WTC11 (cell line): ENCODE measurements at regions of chr17 and their contacts with region 1.

Region 1: GRCh38 chr17:46035112-46035818 is 36.2 kb downstream of the STH start:
- DNase-seq: no peak
- ATAC-seq: no peak
- H3K4me3 Mint-ChIP-seq: no peak overlapping the region
- H3K27ac Mint-ChIP-seq: no peak overlapping the region
- H3K4me1 Mint-ChIP-seq: no peaks in the 10 kb centered on the region
- H3K27me3 Mint-ChIP-seq: no peaks in the 10 kb centered on the region
- CTCF ChIP-seq: no peak

Region 2: GRCh38 chr17:45873728-45874127 is 161.5 kb before region 1 on chr17:
- CTCF ChIA-PET with region 1: no interaction called
- POLR2A ChIA-PET with region 1: no interaction called
- DNase-seq: no peak
- ATAC-seq: no peak
- H3K4me3 Mint-ChIP-seq: no peak overlapping the region
- H3K27ac Mint-ChIP-seq: no peak overlapping the region
- H3K4me1 Mint-ChIP-seq: peaks cover 8% of the 10 kb centered on the region
- H3K27me3 Mint-ChIP-seq: peaks cover 10% of the 10 kb centered on the region; the same call in 1 of the 2 replicates
- CTCF ChIP-seq: no peak

Region 3: DNA sequence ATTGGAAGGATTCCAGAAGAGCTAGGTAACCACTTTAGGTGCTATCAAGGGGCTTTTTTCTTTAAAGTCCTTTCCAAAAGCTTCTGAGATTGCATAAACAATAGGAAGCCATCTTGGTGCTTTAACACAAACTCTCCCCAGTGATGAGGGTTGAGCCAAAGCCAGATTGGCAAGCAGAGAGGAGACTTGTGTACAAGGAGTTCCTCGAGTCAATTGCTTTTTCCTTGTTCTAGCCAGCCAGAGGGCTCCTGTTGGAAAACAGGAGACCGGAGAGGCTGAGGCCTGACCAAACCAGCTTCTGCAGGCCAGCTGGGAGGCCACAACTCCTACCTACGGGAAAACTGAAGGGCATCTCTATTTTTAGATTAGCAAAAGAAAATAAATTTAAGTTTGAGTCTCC is 94.4 kb before region 1 on chr17:
- CTCF ChIA-PET with region 1: no interaction called
- POLR2A ChIA-PET with region 1: no interaction called
- DNase-seq: no peak
- ATAC-seq: no peak
- H3K4me3 Mint-ChIP-seq: no peak overlapping the region
- H3K27ac Mint-ChIP-seq: no peak overlapping the region
- H3K4me1 Mint-ChIP-seq: peaks cover 42% of the 10 kb centered on the region
- H3K27me3 Mint-ChIP-seq: peaks cover 5% of the 10 kb centered on the region
- CTCF ChIP-seq: no peak

Region 4: DNA sequence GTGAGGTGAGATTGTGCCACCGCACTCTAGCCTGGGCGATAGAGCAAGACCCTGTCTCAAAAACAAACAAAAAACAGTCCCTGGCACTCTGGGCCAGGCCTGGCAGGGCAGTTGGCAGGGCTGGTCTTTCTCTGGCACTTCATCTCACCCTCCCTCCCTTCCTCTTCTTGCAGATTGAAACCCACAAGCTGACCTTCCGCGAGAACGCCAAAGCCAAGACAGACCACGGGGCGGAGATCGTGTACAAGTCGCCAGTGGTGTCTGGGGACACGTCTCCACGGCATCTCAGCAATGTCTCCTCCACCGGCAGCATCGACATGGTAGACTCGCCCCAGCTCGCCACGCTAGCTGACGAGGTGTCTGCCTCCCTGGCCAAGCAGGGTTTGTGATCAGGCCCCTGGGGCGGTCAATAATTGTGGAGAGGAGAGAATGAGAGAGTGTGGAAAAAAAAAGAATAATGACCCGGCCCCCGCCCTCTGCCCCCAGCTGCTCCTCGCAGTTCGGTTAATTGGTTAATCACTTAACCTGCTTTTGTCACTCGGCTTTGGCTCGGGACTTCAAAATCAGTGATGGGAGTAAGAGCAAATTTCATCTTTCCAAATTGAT is 11.4 kb before region 1 on chr17:
- CTCF ChIA-PET with region 1: no interaction called
- POLR2A ChIA-PET with region 1: no interaction called
- DNase-seq: no peak
- ATAC-seq: no peak
- H3K4me3 Mint-ChIP-seq: no peak overlapping the region
- H3K27ac Mint-ChIP-seq: no peak overlapping the region
- H3K4me1 Mint-ChIP-seq: peaks cover 21% of the 10 kb centered on the region
- H3K27me3 Mint-ChIP-seq: no peaks in the 10 kb centered on the region
- CTCF ChIP-seq: no peak

Region 5: GRCh38 chr17:46061435-46061834 is 26.2 kb after region 1 on chr17:
- CTCF ChIA-PET with region 1: no interaction called
- POLR2A ChIA-PET with region 1: no interaction called
- DNase-seq: no peak
- ATAC-seq: peak; percentile 64
- H3K4me3 Mint-ChIP-seq: no peak overlapping the region
- H3K27ac Mint-ChIP-seq: no peak overlapping the region
- H3K4me1 Mint-ChIP-seq: peaks cover 37% of the 10 kb centered on the region
- H3K27me3 Mint-ChIP-seq: no peaks in the 10 kb centered on the region
- CTCF ChIP-seq: 0 out of 2 replicates have a peak, but pooled peaks have one; percentile 29

Region 6: GRCh38 chr17:46072998-46073397 is 37.7 kb after region 1 on chr17:
- CTCF ChIA-PET with region 1: no interaction called
- POLR2A ChIA-PET with region 1: interaction called, 11 read pairs
- DNase-seq: no peak
- ATAC-seq: no peak
- H3K4me3 Mint-ChIP-seq: no peak overlapping the region; the same call in 1 of the 2 replicates
- H3K27ac Mint-ChIP-seq: peak overlapping the region; percentile 37
- H3K4me1 Mint-ChIP-seq: peaks cover 43% of the 10 kb centered on the region
- H3K27me3 Mint-ChIP-seq: no peaks in the 10 kb centered on the region
- CTCF ChIP-seq: no peak